Activated naive CD4-positive, alpha-beta T cell treated with anti-CD3 and anti-CD28 coated beads for 36 hours (primary cell): ENCODE measurements at regions of chr11 and their contacts with region 1.

Region 1: DNA sequence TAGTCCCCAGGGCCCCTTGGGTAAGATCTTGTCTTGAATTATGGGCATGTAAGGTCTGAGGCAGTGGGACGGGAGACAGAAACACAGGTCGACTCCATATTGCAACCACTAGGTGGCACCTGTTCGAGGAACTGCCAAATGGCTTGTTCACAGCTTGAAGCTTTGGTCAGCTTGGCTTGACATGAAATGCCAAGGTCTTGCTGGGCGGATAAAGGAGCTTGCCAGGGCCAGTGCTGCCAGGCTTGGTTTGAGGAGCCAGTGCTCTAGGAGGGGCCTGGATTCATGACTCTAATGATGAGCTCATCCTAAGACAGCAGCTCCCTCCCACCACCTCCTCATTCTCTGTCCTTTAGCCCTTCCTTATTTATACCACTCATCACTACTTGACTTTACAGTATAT is 11.9 kb upstream of the NRIP3 start:
- DNase-seq: peak; percentile 73
- H3K4me3 Mint-ChIP-seq: no peak overlapping the region
- H3K27ac Mint-ChIP-seq: no peak overlapping the region
- H3K4me1 Mint-ChIP-seq: peaks cover 14% of the 10 kb centered on the region
- H3K27me3 Mint-ChIP-seq: peaks cover under 1% of the 10 kb centered on the region

Region 2: GRCh38 chr11:8631395-8632118 is 384.1 kb before region 1 on chr11:
- CTCF ChIA-PET with region 1: no interaction called
- intact Hi-C with region 1: no loop called
- DNase-seq: no peak
- H3K4me3 Mint-ChIP-seq: no peak overlapping the region
- H3K27ac Mint-ChIP-seq: no peak overlapping the region
- H3K4me1 Mint-ChIP-seq: no peaks in the 10 kb centered on the region
- H3K27me3 Mint-ChIP-seq: no peaks in the 10 kb centered on the region

Region 3: GRCh38 chr11:8948886-8949285 is 66.8 kb before region 1 on chr11:
- CTCF ChIA-PET with region 1: no interaction called
- intact Hi-C with region 1: no loop called
- DNase-seq: no peak
- H3K4me3 Mint-ChIP-seq: no peak overlapping the region
- H3K27ac Mint-ChIP-seq: no peak overlapping the region
- H3K4me1 Mint-ChIP-seq: no peaks in the 10 kb centered on the region
- H3K27me3 Mint-ChIP-seq: no peaks in the 10 kb centered on the region

Region 4: GRCh38 chr11:9003573-9004309 is 11.9 kb before region 1 on chr11 and contains the start of gene NRIP3:
- CTCF ChIA-PET with region 1: interaction called, 13 read pairs
- intact Hi-C with region 1: loop called (anchors 1 kb)
- DNase-seq: peak; percentile 67
- H3K4me3 Mint-ChIP-seq: peak within 1 kb of the TSS; percentile 68
- H3K27ac Mint-ChIP-seq: no peak within 1 kb of the TSS
- H3K4me1 Mint-ChIP-seq: peaks cover 24% of the 10 kb centered on the region
- H3K27me3 Mint-ChIP-seq: peaks cover 33% of the 10 kb centered on the region
- total RNA-seq, gene NRIP3: 3.0 to 3.5 TPM

Region 5: GRCh38 chr11:9060700-9061111 is 45.0 kb after region 1 on chr11:
- CTCF ChIA-PET with region 1: interaction called, 11 read pairs
- intact Hi-C with region 1: loop called (anchors 2 kb)
- DNase-seq: peak; percentile 89
- H3K4me3 Mint-ChIP-seq: no peak overlapping the region
- H3K27ac Mint-ChIP-seq: no peak overlapping the region
- H3K4me1 Mint-ChIP-seq: peaks cover 12% of the 10 kb centered on the region
- H3K27me3 Mint-ChIP-seq: peaks cover 13% of the 10 kb centered on the region

Region 6: GRCh38 chr11:9092853-9093778 is 77.4 kb after region 1 on chr11:
- CTCF ChIA-PET with region 1: interaction called, 18 read pairs
- intact Hi-C with region 1: no loop called
- DNase-seq: no peak
- H3K4me3 Mint-ChIP-seq: peak overlapping the region; percentile 11
- H3K27ac Mint-ChIP-seq: no peak overlapping the region
- H3K4me1 Mint-ChIP-seq: peaks cover 2% of the 10 kb centered on the region
- H3K27me3 Mint-ChIP-seq: peaks cover 57% of the 10 kb centered on the region

Region 7: GRCh38 chr11:9613830-9614762 is 598.4 kb after region 1 on chr11:
- CTCF ChIA-PET with region 1: no interaction called
- intact Hi-C with region 1: no loop called
- DNase-seq: peak; percentile 95
- H3K4me3 Mint-ChIP-seq: peak overlapping the region; percentile 86
- H3K27ac Mint-ChIP-seq: peak overlapping the region; percentile 98
- H3K4me1 Mint-ChIP-seq: peaks cover 38% of the 10 kb centered on the region
- H3K27me3 Mint-ChIP-seq: no peaks in the 10 kb centered on the region